ENCODE measurements at regions of chr17 and their contacts with region 1.

Region 1: GRCh38 chr17:64129764-64130558 is at the start of gene ERN1:
- H3K4me3 ChIP-seq: peak within 1 kb of the TSS; percentile 83
- H3K27ac ChIP-seq: peak within 1 kb of the TSS; percentile 70
- H3K4me1 ChIP-seq: peaks cover 8% of the 10 kb centered on the region
- CTCF ChIP-seq: no peak

Region 2: DNA sequence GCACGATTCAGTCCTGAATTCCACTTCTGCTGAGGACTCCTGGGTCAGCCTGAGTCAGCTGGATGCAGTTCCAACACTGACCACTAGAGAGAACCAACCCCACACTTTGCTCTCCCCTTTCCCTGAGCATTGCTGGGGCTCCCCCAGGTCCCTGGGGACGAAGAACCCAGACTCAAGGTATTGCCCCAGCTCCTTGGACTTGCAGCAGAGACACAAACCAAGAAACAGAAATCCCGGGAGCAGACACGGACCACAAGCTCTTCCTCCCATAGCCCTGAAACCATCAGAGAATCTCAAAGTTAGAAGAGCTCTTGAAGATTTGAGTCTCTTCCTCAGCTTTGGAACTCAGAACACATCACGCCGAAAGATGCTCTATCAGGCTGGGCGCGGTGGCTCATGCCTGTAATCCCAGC is 210.6 kb before region 1 on chr17:
- CTCF ChIA-PET with region 1: interaction called, 58 read pairs
- POLR2A ChIA-PET with region 1: no interaction called
- H3K4me3 ChIP-seq: no peak overlapping the region
- H3K27ac ChIP-seq: no peak overlapping the region
- H3K4me1 ChIP-seq: no peaks in the 10 kb centered on the region
- CTCF ChIP-seq: peak; percentile 38; the same call in 1 of the 2 replicates

Region 3: GRCh38 chr17:64063766-64064224 is 66.2 kb before region 1 on chr17:
- CTCF ChIA-PET with region 1: interaction called, 99 read pairs
- POLR2A ChIA-PET with region 1: interaction called, 3 read pairs
- H3K4me3 ChIP-seq: no peak overlapping the region
- H3K27ac ChIP-seq: no peak overlapping the region
- H3K4me1 ChIP-seq: no peaks in the 10 kb centered on the region
- CTCF ChIP-seq: peak; percentile 18; the same call in 1 of the 2 replicates

Region 4: DNA sequence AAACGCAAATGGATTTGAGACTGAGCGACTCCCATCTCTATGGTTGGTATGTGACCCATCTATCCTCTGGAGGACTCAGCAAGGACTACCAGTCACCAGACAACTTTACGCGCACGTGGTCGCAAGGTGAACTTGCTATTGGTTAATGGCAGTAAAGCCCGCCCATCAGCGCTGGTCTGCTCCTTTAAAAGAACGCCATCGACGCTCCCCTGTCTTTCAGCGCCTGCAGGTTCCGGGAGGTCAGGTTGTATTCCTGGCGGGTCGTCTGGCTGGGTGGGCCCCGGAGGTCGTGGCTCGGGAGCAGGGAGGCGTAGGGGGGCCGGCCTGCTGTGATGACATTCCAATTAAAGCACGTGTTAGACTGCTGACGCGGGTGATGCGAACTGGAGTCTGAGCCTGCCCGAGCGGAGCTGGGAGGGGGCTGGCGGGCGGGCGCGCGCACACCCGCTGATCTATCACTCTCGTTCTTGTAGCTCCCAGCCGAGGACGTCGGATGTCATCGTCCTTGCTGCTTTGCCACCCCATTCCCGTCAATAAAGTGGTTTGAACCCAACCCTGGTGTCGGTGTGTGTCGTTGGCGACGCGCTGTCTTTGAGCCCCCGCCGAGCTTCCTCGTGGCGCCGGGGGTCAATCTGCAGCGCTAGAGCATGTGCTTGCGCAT is 15.9 kb after region 1 on chr17:
- CTCF ChIA-PET with region 1: interaction called, 59 read pairs
- POLR2A ChIA-PET with region 1: interaction called, 19 read pairs
- H3K4me3 ChIP-seq: peak overlapping the region; percentile 63
- H3K27ac ChIP-seq: peak overlapping the region; percentile 91
- H3K4me1 ChIP-seq: no peaks in the 10 kb centered on the region
- CTCF ChIP-seq: no peak

Region 5: GRCh38 chr17:64291254-64291851 is 161.4 kb after region 1 on chr17:
- CTCF ChIA-PET with region 1: interaction called, 16 read pairs
- POLR2A ChIA-PET with region 1: no interaction called
- H3K4me3 ChIP-seq: no peak overlapping the region
- H3K27ac ChIP-seq: no peak overlapping the region
- H3K4me1 ChIP-seq: no peaks in the 10 kb centered on the region
- CTCF ChIP-seq: no peak